ENCODE measurements at regions of chr12 and their contacts with region 1.

Region 1: DNA sequence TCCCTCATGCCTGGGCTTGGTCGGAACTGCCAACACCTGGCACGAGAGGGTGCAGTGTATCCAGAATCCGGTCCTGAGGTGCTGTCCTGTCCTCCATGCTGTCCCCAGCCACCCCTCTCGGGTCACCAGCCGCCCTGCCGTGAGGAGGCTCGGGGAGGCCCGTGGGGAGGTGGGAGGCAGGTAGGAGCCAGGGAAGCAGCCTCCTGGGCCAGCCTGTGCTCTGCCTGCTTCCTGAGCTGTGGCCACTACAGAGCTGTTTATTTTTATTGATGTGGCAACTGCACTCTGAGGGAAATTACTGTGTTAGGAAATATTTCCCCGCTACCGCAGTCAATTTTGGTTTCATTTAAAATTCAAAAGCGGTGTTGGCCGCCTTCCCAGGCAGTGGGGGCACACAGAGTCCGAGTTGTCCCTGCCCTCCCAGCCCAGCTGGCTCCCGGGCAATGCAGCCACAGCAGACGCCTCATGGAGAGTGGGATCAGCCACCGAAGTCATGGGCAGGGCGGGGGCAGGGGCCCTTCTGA is 18.3 kb downstream of the NOC4L start:
- DNase-seq: peak in 4 of 5 donors; percentile 32 to 53 (median 45)
- H3K4me3 ChIP-seq: peak overlapping the region in 1 of 2 donors; percentile 19
- H3K4me3 Mint-ChIP-seq: peak overlapping the region in 3 of 8 donors; percentile 52 to 74 (median 58)
- H3K27ac ChIP-seq: no peak overlapping the region
- H3K27ac Mint-ChIP-seq: peak overlapping the region in 1 of 7 donors; percentile 57
- H3K4me1 ChIP-seq: peaks cover 22% of the 10 kb centered on the region
- H3K4me1 Mint-ChIP-seq: peaks cover 10 to 19% (median 15%) of the 10 kb centered on the region in 4 donors
- H3K27me3 ChIP-seq: no peaks in the 10 kb centered on the region
- H3K27me3 Mint-ChIP-seq: no peaks in the 10 kb centered on the region

Region 2: GRCh38 chr12:132003846-132004245 is 158.7 kb before region 1 on chr12:
- CTCF ChIA-PET with region 1: no interaction called
- POLR2A ChIA-PET with region 1: no interaction called
- intact Hi-C with region 1: no loop called
- DNase-seq: no peak
- H3K4me3 ChIP-seq: no peak overlapping the region
- H3K4me3 Mint-ChIP-seq: no peak overlapping the region
- H3K27ac ChIP-seq: no peak overlapping the region
- H3K27ac Mint-ChIP-seq: no peak overlapping the region
- H3K4me1 ChIP-seq: no peaks in the 10 kb centered on the region
- H3K4me1 Mint-ChIP-seq: no peaks in the 10 kb centered on the region
- H3K27me3 ChIP-seq: no peaks in the 10 kb centered on the region
- H3K27me3 Mint-ChIP-seq: no peaks in the 10 kb centered on the region

Region 3: DNA sequence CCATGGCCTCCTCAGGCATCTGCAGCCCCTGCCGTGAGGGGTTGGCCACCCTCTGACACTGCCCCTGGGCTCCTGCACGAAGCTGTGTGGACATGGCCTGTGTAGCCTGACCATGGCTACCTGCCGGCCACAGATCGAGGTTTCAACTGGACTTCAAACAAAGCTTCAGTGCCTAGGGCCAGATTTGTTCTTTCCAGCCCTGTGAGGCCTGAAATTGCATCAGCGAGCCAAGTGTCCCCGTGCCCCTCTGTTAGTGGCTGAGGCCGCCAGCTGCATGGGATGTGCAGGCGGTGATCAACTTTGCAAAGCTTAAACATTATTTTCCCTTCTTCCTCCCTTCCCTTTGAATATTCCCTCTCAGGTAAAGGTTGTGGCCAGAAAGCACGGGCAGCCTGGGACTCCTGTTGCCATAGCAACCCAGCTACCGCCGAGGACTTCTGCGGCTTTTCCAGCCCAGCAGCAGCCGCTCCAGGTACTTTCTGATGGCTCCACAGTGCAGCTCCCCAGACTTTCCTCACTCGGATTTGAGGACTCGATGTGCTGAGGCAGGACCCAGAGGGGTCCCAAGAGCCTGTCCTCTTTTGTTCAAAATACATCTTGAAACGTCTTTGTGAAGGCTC is 54.2 kb before region 1 on chr12:
- CTCF ChIA-PET with region 1: no interaction called
- POLR2A ChIA-PET with region 1: no interaction called
- intact Hi-C with region 1: no loop called
- DNase-seq: no peak
- H3K4me3 ChIP-seq: no peak overlapping the region
- H3K4me3 Mint-ChIP-seq: no peak overlapping the region
- H3K27ac ChIP-seq: no peak overlapping the region
- H3K27ac Mint-ChIP-seq: peak overlapping the region in 1 of 7 donors; percentile 59
- H3K4me1 ChIP-seq: no peaks in the 10 kb centered on the region
- H3K4me1 Mint-ChIP-seq: peaks cover 0 to 2% (median 0%) of the 10 kb centered on the region in 4 donors
- H3K27me3 ChIP-seq: no peaks in the 10 kb centered on the region
- H3K27me3 Mint-ChIP-seq: no peaks in the 10 kb centered on the region

Region 4: GRCh38 chr12:132178801-132179401 is 16.3 kb after region 1 on chr12:
- CTCF ChIA-PET with region 1: no interaction called
- POLR2A ChIA-PET with region 1: no interaction called
- intact Hi-C with region 1: loop called (anchors 2 kb)
- DNase-seq: peak; percentile 57 to 76 (median 72)
- H3K4me3 ChIP-seq: peak overlapping the region in 1 of 2 donors; percentile 20
- H3K4me3 Mint-ChIP-seq: peak overlapping the region; percentile 45 to 94 (median 88)
- H3K27ac ChIP-seq: peak overlapping the region; percentile 38
- H3K27ac Mint-ChIP-seq: peak overlapping the region; percentile 72 to 97 (median 91)
- H3K4me1 ChIP-seq: peaks cover 24% of the 10 kb centered on the region
- H3K4me1 Mint-ChIP-seq: peaks cover 14 to 32% (median 28%) of the 10 kb centered on the region in 4 donors
- H3K27me3 ChIP-seq: no peaks in the 10 kb centered on the region
- H3K27me3 Mint-ChIP-seq: peaks cover 5% of the 10 kb centered on the region in 2 donors

Region 5: GRCh38 chr12:132218915-132219314 is 56.3 kb after region 1 on chr12:
- CTCF ChIA-PET with region 1: interaction called, 11 read pairs
- POLR2A ChIA-PET with region 1: no interaction called
- intact Hi-C with region 1: loop called (anchors 2 kb)
- DNase-seq: peak; percentile 47 to 57 (median 53)
- H3K4me3 ChIP-seq: no peak overlapping the region
- H3K4me3 Mint-ChIP-seq: no peak overlapping the region
- H3K27ac ChIP-seq: no peak overlapping the region
- H3K27ac Mint-ChIP-seq: peak overlapping the region in 1 of 7 donors; percentile 35
- H3K4me1 ChIP-seq: peaks cover 14% of the 10 kb centered on the region
- H3K4me1 Mint-ChIP-seq: peaks cover 7 to 16% (median 12%) of the 10 kb centered on the region in 4 donors
- H3K27me3 ChIP-seq: no peaks in the 10 kb centered on the region
- H3K27me3 Mint-ChIP-seq: peaks cover 5 to 9% of the 10 kb centered on the region in 2 donors

Measured in CD4-positive, alpha-beta memory T cell (primary cell).